ENCODE measurements at regions of chr15 and their contacts with region 1.

Region 1: GRCh38 chr15:80804965-80805495 is 25.9 kb downstream of the CEMIP start:
- DNase-seq: peak; percentile 46
- H3K4me3 Mint-ChIP-seq: peak overlapping the region; percentile 11
- H3K27ac Mint-ChIP-seq: peak overlapping the region; percentile 55
- H3K4me1 Mint-ChIP-seq: peaks cover 26% of the 10 kb centered on the region
- H3K27me3 Mint-ChIP-seq: no peaks in the 10 kb centered on the region

Region 2: GRCh38 chr15:80789296-80789695 is 15.7 kb before region 1 on chr15:
- CTCF ChIA-PET with region 1: interaction called, 4 read pairs
- POLR2A ChIA-PET with region 1: interaction called, 6 read pairs
- intact Hi-C with region 1: loop called (anchors 2 kb)
- DNase-seq: no peak
- H3K4me3 Mint-ChIP-seq: no peak overlapping the region
- H3K27ac Mint-ChIP-seq: no peak overlapping the region
- H3K4me1 Mint-ChIP-seq: no peaks in the 10 kb centered on the region
- H3K27me3 Mint-ChIP-seq: peaks cover 3% of the 10 kb centered on the region

Region 3: GRCh38 chr15:80875568-80876347 is 70.7 kb after region 1 on chr15:
- CTCF ChIA-PET with region 1: no interaction called
- POLR2A ChIA-PET with region 1: no interaction called
- intact Hi-C with region 1: no loop called
- DNase-seq: no peak
- H3K4me3 Mint-ChIP-seq: no peak overlapping the region
- H3K27ac Mint-ChIP-seq: no peak overlapping the region
- H3K4me1 Mint-ChIP-seq: no peaks in the 10 kb centered on the region
- H3K27me3 Mint-ChIP-seq: peaks cover 5% of the 10 kb centered on the region

Region 4: DNA sequence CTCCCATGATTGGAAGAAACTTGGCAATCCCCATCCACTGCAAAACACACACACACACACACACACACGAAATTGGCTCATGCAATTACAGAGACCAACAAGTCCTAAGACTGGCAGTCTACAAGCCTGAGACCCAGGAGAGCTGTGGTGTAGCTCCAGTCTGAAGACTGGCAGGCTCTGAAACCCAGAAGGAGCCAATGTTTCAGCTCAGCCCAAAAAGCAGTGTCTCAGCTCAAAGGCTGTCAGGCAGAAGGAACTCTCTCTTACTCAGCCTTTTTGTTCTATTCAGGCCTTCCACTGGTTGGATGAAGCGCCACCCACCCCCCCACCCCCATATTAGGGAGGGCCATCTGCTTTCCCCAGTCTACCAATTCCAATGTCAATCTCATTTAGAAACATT is 152.5 kb after region 1 on chr15:
- CTCF ChIA-PET with region 1: no interaction called
- POLR2A ChIA-PET with region 1: no interaction called
- intact Hi-C with region 1: loop called (anchors 1 kb)
- DNase-seq: no peak
- H3K4me3 Mint-ChIP-seq: no peak overlapping the region
- H3K27ac Mint-ChIP-seq: no peak overlapping the region
- H3K4me1 Mint-ChIP-seq: peaks cover 27% of the 10 kb centered on the region
- H3K27me3 Mint-ChIP-seq: no peaks in the 10 kb centered on the region

Measured in activated CD4-positive, alpha-beta memory T cell treated with anti-CD3 and anti-CD28 coated beads for 36 hours (primary cell).